PC-9 (cell line): ENCODE measurements at regions of chr1 and their contacts with region 1.

Region 1: GRCh38 chr1:210841926-210842625 is 291.9 kb downstream of the KCNH1 start:
- DNase-seq: no peak
- H3K4me3 ChIP-seq: no peak overlapping the region
- H3K27ac ChIP-seq: no peak overlapping the region
- H3K4me1 ChIP-seq: no peaks in the 10 kb centered on the region
- H3K27me3 ChIP-seq: 0 out of 2 replicates have a peak, but pooled peaks cover 13% of the 10 kb centered on the region
- CTCF ChIP-seq: no peak

Region 2: GRCh38 chr1:210584439-210585113 is 257.5 kb before region 1 on chr1:
- CTCF ChIA-PET with region 1: no interaction called
- POLR2A ChIA-PET with region 1: no interaction called
- intact Hi-C with region 1: no loop called
- DNase-seq: peak; percentile 64 to 79
- H3K4me3 ChIP-seq: no peak overlapping the region
- H3K27ac ChIP-seq: no peak overlapping the region
- H3K4me1 ChIP-seq: no peaks in the 10 kb centered on the region
- H3K27me3 ChIP-seq: no peaks in the 10 kb centered on the region
- CTCF ChIP-seq: peak; percentile 88

Region 3: DNA sequence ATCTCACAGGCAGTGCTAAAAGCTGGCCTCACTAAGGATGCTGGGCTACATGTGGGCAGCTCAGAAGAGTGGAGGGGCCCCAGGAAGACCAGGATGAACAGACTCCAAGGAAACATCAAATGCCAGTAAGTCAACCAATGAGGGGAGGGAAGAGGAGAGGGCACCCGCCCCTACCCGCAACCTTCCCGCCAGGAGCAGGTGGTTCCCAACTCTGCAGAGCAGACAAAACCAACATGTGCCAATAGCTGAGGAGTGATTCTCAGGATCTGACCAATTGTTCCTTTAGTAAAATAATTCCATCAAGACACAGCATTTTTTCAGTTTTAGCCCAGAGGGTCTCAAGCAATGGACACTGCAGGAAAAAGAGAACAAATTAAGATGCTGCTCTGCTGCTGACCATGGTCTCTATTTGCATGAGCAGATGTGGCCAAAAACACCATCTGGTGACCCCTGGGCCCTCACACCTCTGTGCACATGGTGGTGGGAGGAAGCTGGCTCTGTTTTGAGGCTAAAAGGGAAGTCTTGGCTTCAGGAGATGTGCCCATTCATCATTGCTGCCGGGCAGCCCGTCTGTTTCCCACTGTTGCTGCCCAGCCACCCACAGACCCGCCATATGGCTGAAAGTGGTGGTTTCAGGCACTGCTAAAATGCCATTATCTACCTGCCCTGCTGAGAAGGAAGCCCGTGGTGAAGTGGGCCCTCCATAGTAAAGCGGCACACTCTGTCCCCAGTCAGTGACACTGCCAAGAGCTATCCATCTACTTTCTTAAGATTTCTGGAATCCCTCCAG is 60.1 kb after region 1 on chr1:
- CTCF ChIA-PET with region 1: no interaction called
- POLR2A ChIA-PET with region 1: no interaction called
- intact Hi-C with region 1: loop called (anchors 5 kb)
- DNase-seq: no peak
- H3K4me3 ChIP-seq: no peak overlapping the region
- H3K27ac ChIP-seq: no peak overlapping the region
- H3K4me1 ChIP-seq: no peaks in the 10 kb centered on the region
- H3K27me3 ChIP-seq: 0 out of 2 replicates have a peak, but pooled peaks cover 14% of the 10 kb centered on the region
- CTCF ChIP-seq: no peak